ENCODE measurements at regions of chr17 and their contacts with region 1.

Region 1: GRCh38 chr17:57284984-57285646 is 28.8 kb downstream of the MSI2 start:
- DNase-seq: no peak
- ATAC-seq: no peak
- H3K4me3 ChIP-seq: no peak overlapping the region
- H3K27ac ChIP-seq: peak overlapping the region; percentile 85 to 92 (median 88)
- H3K4me1 ChIP-seq: peaks cover 86 to 88% of the 10 kb centered on the region in 2 donors
- H3K27me3 ChIP-seq: no peaks in the 10 kb centered on the region
- CTCF ChIP-seq: no peak
- POLR2A ChIP-seq: no peak

Region 2: DNA sequence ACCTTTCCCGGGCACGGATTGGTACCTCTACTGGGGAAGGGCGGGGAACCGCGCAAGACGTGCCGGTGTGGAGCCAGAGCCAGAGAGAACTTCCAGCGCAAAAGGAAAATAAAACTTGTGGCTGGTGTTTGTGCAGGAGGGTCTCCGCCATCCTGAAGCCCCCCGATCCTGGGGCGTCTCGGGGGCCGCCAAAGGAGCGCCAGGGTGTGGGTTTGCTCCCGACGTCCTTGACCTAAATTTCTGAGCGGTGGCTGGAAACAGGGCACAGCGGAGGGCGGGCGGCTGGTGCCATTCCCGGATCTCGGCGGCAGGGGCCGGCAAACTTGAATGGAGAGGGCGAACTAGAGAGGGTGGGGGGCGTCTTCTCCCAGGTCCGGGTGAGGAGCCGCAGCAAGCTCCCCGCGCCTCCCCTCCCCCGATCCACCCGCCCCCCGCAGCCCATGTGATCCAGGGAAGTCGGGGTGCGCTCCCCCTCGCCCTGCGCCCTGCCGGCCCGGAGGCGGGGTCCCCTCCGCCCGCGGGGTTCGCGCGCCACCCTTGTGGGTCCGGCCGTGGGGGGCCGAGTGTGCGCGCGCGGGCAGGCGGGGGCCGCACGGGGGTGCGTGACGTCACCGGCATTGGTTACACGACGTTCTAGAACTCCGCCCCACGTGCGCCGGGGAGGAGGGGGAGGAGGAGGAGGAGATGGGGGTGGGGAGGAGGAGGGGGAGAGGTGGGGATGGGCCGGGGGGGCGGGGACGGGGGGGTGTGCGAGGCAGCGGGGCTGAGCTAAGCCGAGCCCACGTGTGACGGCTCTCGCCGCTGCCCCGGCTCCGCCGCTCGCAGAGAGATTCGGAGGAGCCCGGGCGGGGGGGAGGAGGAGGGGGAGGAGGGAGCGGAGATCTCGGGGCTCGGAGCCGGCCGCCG is 29.1 kb before region 1 on chr17 and contains the start of gene MSI2:
- in situ Hi-C with region 1: no loop called
- intact Hi-C with region 1: loop called (anchors 2 kb)
- DNase-seq: peak; percentile 94 to 95
- ATAC-seq: peak; percentile 80 to 83
- H3K4me3 ChIP-seq: peak within 1 kb of the TSS; percentile 55 to 92 (median 75)
- H3K27ac ChIP-seq: peak within 1 kb of the TSS; percentile 86 to 98 (median 96)
- H3K4me1 ChIP-seq: peaks cover 19 to 32% of the 10 kb centered on the region in 2 donors
- H3K27me3 ChIP-seq: no peaks in the 10 kb centered on the region
- CTCF ChIP-seq: no peak
- POLR2A ChIP-seq: peak; percentile 65 to 76
- total RNA-seq, gene MSI2: 33.1 to 66.2 (median 48.5) TPM

Region 3: DNA sequence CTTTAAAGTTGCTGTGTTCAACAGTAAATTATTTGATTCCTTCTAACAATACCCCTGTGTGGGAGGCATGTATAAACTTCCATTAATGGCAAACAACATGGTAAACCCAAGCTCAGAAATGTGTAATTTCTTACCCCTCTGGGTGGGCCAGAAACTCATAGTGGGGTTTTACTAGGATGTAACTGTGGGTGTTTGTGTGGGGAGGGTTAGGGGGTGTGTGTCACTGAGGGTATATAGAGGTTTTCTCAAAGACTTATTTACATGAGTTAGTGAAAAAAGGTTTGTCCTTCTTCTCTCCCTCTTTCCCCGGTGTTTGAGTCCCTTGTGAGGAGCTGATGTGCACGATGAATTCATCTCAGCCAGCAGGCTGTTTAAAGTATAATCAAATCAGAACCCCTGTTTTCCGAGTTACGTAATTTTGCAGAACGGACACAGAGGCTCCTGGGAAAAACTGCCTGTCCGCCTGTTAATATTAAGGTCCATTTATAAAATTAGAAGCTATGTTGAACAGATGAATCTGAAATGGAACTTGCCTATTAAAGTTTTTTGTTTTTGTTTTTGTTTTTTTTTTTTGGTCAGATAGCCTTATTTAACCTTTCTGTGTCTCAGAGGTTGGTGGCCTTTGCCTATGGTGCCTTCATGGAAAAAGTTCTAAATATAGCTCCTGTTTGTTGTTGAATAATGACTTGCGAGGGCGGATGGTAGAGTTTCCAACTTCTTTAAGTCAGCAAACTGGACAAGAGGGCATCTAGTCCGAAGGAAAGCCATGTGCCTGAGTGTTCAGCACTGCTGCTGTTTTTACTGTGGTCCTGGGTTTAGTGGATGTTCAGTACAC is 44.5 kb after region 1 on chr17:
- in situ Hi-C with region 1: no loop called
- intact Hi-C with region 1: no loop called
- DNase-seq: peak in 1 of 2 donors; percentile 39
- ATAC-seq: peak; percentile 60 to 77
- H3K4me3 ChIP-seq: peak overlapping the region in 2 of 4 donors; percentile 1 to 16
- H3K27ac ChIP-seq: peak overlapping the region; percentile 77 to 84 (median 82)
- H3K4me1 ChIP-seq: peaks cover 49 to 68% of the 10 kb centered on the region in 2 donors
- H3K27me3 ChIP-seq: no peaks in the 10 kb centered on the region
- CTCF ChIP-seq: no peak
- POLR2A ChIP-seq: no peak

Region 4: DNA sequence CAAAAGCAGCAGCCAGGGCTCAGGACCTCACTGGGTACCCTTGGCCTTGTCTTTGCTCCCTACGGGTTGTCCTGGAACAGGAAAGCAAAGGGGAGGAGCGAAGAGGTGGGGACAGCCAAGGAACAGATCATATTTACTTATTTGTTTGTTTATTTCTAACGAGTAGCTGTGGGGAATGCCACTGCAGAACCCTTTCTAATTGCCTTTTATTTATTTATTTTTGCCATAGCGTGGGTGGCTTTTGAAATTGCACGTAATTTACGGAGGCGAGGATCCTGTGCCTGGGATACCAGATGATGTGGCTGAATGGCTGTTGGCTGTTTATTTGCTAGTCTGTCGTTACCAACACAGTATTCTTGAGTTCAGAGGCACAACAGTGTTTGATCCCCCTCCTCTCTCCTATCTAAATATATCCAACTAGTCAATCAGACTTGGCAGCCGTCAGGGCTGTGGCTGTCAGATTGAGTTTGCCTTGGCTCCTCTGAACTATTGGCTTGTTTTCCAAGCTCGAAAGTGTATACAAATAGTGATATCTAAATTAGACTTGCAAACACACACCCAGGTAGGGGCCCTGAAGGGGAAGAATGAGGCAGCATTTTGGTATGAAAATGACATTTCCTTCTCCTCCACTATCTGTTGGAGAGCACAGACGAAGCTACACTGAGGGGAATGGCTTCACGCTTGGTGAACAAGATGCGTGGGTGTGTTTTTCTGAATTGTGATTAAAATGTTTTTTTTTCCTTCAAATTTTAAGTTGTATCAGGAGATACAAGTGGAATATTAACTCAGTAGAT is 81.6 kb after region 1 on chr17:
- in situ Hi-C with region 1: no loop called
- intact Hi-C with region 1: loop called (anchors 5 kb)
- DNase-seq: peak; percentile 62 to 78
- ATAC-seq: peak; percentile 25 to 52
- H3K4me3 ChIP-seq: peak overlapping the region; percentile 1 to 42 (median 12)
- H3K27ac ChIP-seq: peak overlapping the region; percentile 85 to 90 (median 88)
- H3K4me1 ChIP-seq: peaks cover 85 to 90% of the 10 kb centered on the region in 2 donors
- H3K27me3 ChIP-seq: no peaks in the 10 kb centered on the region
- CTCF ChIP-seq: no peak
- POLR2A ChIP-seq: no peak

Region 5: GRCh38 chr17:57408071-57408811 is 123.1 kb after region 1 on chr17:
- in situ Hi-C with region 1: no loop called
- intact Hi-C with region 1: loop called (anchors 5 kb)
- DNase-seq: no peak
- ATAC-seq: no peak
- H3K4me3 ChIP-seq: no peak overlapping the region
- H3K27ac ChIP-seq: peak overlapping the region in 1 of 4 donors; percentile 82
- H3K4me1 ChIP-seq: peaks cover 54 to 68% of the 10 kb centered on the region in 2 donors
- H3K27me3 ChIP-seq: no peaks in the 10 kb centered on the region
- CTCF ChIP-seq: no peak
- POLR2A ChIP-seq: no peak

Region 6: DNA sequence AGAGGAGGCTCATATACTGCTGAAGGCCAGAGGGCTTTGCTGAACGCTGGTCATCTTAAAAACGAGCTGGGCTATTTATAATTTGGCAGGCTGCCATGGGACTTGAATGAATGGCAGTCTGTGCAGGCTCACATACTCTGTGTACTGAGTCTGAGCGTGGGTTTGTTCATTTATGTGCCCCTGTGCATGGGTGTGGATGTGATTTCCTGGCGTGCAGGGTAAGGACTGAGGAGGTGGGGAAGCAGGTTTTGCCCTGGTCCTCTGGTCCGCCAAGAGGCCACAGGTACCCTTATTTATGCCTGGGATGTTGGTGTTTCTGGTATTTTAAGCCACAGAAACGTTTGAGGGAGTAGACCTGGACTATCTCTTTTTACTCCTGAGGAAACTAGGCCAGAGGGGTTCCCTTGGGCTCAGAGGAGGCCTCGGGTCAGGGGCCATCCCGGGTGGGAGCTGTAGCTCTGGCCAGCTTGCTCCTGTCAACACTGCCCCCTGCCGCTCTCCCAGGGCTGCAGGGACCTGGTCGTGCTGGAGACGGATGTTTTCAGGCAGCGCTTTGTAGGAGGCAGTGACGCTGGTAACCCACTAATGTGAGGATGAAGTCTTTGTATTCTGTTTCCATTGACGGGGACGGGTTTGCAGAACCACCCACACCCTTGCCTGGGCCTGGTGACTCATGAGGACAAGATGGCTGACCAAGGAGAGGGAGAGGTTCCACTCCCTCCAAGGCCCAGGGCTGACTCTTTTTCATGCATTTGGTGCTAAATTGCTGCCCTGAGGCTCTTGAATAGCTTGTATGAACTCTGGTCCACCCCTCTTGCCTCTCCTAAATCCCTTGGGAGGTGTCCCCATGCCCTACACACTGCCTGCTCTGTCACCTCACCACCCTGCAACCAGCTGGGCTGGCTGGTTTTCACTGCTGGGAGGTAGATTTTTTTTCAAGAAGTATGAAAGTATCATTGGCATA is 155.7 kb after region 1 on chr17:
- in situ Hi-C with region 1: no loop called
- intact Hi-C with region 1: loop called (anchors 5 kb)
- DNase-seq: peak; percentile 58 to 75
- ATAC-seq: peak; percentile 76 to 79
- H3K4me3 ChIP-seq: no peak overlapping the region
- H3K27ac ChIP-seq: peak overlapping the region; percentile 90 to 96 (median 92)
- H3K4me1 ChIP-seq: peaks cover 78 to 85% of the 10 kb centered on the region in 2 donors
- H3K27me3 ChIP-seq: no peaks in the 10 kb centered on the region
- CTCF ChIP-seq: peak in 2 of 5 experiments; percentile 11 to 21
- POLR2A ChIP-seq: no peak

Region 7: DNA sequence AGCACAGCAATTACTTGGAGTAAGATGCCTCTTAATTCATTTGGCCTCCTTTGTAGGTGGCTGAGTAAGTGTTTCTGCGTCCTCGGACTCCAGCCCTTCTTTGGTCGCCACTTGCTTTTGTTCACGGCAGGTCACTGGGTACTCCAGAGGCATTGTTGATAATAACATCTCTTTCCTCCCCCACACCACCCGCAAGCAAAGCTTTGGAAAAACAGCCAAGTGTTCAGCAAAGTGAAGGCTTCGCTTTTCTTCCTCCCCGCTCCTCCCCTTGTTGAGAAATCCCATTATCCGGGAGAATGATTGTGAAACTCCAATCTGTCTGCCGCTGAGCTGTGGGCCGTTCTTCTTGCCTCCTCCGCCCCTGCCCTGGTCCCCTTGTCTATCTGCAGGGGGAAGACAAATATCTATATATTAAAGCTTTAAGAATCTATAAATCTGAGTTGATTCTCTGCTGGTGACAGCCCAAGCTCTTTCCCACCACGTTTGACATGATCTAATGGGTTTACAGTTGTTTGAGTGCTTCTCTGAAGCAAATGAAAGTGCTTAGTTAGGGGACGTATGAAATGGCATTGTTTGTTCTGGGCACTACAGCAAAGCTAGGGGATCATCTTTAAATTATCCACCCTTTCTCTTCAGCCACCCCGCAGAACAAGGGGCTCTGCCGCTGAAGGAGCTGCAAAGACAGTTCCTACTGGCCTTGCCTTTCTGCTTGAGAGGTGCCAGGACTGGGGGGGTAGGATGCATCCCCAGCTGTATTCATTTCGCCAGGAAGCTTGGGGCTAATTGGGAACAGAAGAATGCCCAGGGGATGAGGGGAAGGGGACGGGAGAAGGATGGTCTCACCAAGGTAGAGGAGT is 292.9 kb after region 1 on chr17:
- in situ Hi-C with region 1: no loop called
- intact Hi-C with region 1: loop called (anchors 10 kb)
- DNase-seq: peak; percentile 41 to 60
- ATAC-seq: peak; percentile 66 to 72
- H3K4me3 ChIP-seq: peak overlapping the region; percentile 1 to 36 (median 17)
- H3K27ac ChIP-seq: peak overlapping the region; percentile 46 to 82 (median 70)
- H3K4me1 ChIP-seq: peaks cover 31 to 38% of the 10 kb centered on the region in 2 donors
- H3K27me3 ChIP-seq: no peaks in the 10 kb centered on the region
- CTCF ChIP-seq: no peak
- POLR2A ChIP-seq: no peak

Region 8: GRCh38 chr17:58096892-58097291 is 811.8 kb after region 1 on chr17:
- in situ Hi-C with region 1: no loop called
- intact Hi-C with region 1: no loop called
- DNase-seq: no peak
- ATAC-seq: no peak
- H3K4me3 ChIP-seq: no peak overlapping the region
- H3K27ac ChIP-seq: no peak overlapping the region
- H3K4me1 ChIP-seq: no peaks in the 10 kb centered on the region
- H3K27me3 ChIP-seq: no peaks in the 10 kb centered on the region
- CTCF ChIP-seq: no peak
- POLR2A ChIP-seq: no peak